Activated CD4-positive, alpha-beta T cell treated with anti-CD3 and anti-CD28 coated beads, Interleukin-2, amount 10 ng/mL, durations not matched to agents 24 days and 14 days (primary cell): ENCODE measurements at regions of chr12 and their contacts with region 1.

Region 1: GRCh38 chr12:56127888-56128669 is at the start of gene ESYT1:
- DNase-seq: peak; percentile 99
- H3K4me3 Mint-ChIP-seq: peak within 1 kb of the TSS; percentile 98
- H3K27ac Mint-ChIP-seq: peak within 1 kb of the TSS; percentile 94
- H3K4me1 Mint-ChIP-seq: peaks cover 65% of the 10 kb centered on the region
- H3K27me3 Mint-ChIP-seq: no peaks in the 10 kb centered on the region
- total RNA-seq, gene ESYT1: 155 and 158 TPM in 2 replicates

Region 2: GRCh38 chr12:56152318-56153033 is 24.4 kb after region 1 on chr12 and contains the start of gene MYL6B:
- intact Hi-C with region 1: loop called (anchors 1 kb)
- DNase-seq: peak; percentile 98
- H3K4me3 Mint-ChIP-seq: peak within 1 kb of the TSS; percentile 88
- H3K27ac Mint-ChIP-seq: peak within 1 kb of the TSS; percentile 98
- H3K4me1 Mint-ChIP-seq: peaks cover 39% of the 10 kb centered on the region
- H3K27me3 Mint-ChIP-seq: no peaks in the 10 kb centered on the region
- total RNA-seq, gene MYL6B: 63.3 and 68.9 TPM in 2 replicates

Region 3: DNA sequence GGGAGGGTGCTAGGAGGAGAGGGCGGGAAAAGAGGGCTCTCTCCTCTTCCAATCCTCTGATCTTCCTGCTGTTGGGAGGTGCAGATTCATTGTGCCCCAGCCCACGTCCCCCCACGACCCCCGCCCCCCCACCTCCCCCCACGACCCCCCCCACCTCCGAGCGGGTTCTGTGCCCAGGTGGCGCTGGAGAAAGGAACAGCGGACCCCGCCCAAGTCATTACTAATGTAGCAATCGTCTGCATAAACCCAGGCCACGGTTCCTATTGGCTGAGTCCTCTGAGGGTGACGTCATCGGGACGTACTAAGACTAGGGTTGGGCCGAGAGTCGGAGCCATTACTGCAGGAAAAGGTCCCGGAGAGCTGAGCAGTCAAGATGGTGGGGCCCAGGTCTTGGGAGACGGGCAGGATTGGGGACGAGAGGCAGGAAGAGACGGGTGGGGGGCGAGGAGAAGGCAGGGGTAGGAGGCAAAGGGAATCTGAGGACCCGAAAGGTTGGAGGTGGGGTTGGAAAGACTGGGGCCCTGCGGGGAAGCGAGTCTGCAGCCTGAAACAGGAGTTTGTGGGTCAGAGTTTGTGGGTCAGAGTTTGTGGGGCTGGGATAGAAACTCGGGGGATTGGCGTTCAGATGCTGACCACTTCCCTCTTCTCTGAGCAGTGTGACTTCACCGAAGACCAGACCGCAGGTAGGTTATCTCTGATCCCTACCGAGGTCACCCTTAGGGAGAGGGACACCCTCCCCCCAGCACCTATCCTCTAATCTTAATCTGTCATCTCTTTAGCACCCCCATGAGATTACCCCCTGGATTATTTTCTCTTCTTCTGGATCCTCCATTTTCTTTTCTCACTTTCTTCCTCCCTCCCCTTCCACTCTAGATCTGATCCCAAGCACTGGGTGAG is 30.2 kb after region 1 on chr12 and contains the start of gene MYL6:
- intact Hi-C with region 1: loop called (anchors 1 kb)
- DNase-seq: peak; percentile 98
- H3K4me3 Mint-ChIP-seq: peak within 1 kb of the TSS; percentile 100
- H3K27ac Mint-ChIP-seq: peak within 1 kb of the TSS; percentile 94
- H3K4me1 Mint-ChIP-seq: peaks cover 45% of the 10 kb centered on the region
- H3K27me3 Mint-ChIP-seq: no peaks in the 10 kb centered on the region
- total RNA-seq, gene MYL6: 717 and 752 TPM in 2 replicates

Region 4: GRCh38 chr12:56189176-56189917 is 61.3 kb after region 1 on chr12 and contains the start of gene SMARCC2:
- intact Hi-C with region 1: loop called (anchors 1 kb)
- DNase-seq: peak; percentile 96
- H3K4me3 Mint-ChIP-seq: peak within 1 kb of the TSS; percentile 97
- H3K27ac Mint-ChIP-seq: peak within 1 kb of the TSS; percentile 95
- H3K4me1 Mint-ChIP-seq: peaks cover 42% of the 10 kb centered on the region
- H3K27me3 Mint-ChIP-seq: no peaks in the 10 kb centered on the region
- total RNA-seq, gene SMARCC2: 127 and 130 TPM in 2 replicates

Region 5: GRCh38 chr12:56258057-56258819 is 130.2 kb after region 1 on chr12 and contains the start of gene ANKRD52:
- intact Hi-C with region 1: loop called (anchors 2 kb)
- DNase-seq: peak; percentile 96
- H3K4me3 Mint-ChIP-seq: peak within 1 kb of the TSS; percentile 96
- H3K27ac Mint-ChIP-seq: peak within 1 kb of the TSS; percentile 84
- H3K4me1 Mint-ChIP-seq: peaks cover 17% of the 10 kb centered on the region
- H3K27me3 Mint-ChIP-seq: no peaks in the 10 kb centered on the region
- total RNA-seq, gene ANKRD52: 68.0 and 69.0 TPM in 2 replicates

Region 6: GRCh38 chr12:56448860-56449621 is 321.0 kb after region 1 on chr12 and contains the start of gene TIMELESS:
- intact Hi-C with region 1: loop called (anchors 5 kb)
- DNase-seq: peak; percentile 97
- H3K4me3 Mint-ChIP-seq: peak within 1 kb of the TSS; percentile 95
- H3K27ac Mint-ChIP-seq: peak within 1 kb of the TSS; percentile 90
- H3K4me1 Mint-ChIP-seq: peaks cover 29% of the 10 kb centered on the region
- H3K27me3 Mint-ChIP-seq: no peaks in the 10 kb centered on the region
- total RNA-seq, gene TIMELESS: 46.5 and 48.8 TPM in 2 replicates

Region 7: DNA sequence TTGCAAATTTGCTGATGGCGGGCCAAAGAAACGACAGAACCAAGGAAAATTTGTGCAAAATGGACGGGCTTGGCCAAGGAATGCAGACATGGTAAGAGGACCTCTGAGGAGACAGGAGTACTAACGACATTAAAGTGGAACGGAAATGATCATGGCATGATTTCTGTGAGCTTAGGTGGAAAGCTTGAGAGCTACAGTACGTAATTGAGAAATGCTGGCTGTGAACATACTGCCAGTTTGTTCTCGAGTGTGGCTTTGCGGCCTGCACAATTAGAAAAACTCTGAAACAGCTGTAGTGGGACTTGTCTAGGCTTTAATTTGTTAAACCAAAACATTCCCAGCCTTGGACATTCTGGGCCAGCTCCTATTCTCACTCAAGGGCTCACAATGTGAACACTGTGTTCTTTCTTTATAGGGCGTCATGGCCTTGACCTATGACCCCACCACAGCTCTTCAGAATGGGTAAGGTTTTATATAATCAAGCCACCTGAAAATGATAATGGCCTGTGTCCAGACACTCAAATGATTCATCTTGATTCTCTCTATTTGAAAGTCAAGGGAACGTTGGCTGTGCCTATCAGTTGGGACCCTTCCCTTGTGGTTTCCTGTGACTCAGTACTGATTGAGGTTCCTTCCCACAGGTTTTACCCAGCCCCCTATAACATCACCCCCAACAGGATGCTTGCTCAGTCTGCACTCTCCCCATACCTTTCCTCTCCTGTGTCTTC is 453.5 kb after region 1 on chr12:
- intact Hi-C with region 1: no loop called
- DNase-seq: peak; percentile 64
- H3K4me3 Mint-ChIP-seq: no peak overlapping the region
- H3K27ac Mint-ChIP-seq: no peak overlapping the region
- H3K4me1 Mint-ChIP-seq: peaks cover 12% of the 10 kb centered on the region
- H3K27me3 Mint-ChIP-seq: no peaks in the 10 kb centered on the region

Region 8: GRCh38 chr12:57751788-57752667 is 1623.9 kb after region 1 on chr12 and contains the start of gene CDK4:
- intact Hi-C with region 1: loop called (anchors 10 kb)
- DNase-seq: peak; percentile 99
- H3K4me3 Mint-ChIP-seq: peak within 1 kb of the TSS; percentile 96
- H3K27ac Mint-ChIP-seq: peak within 1 kb of the TSS; percentile 97
- H3K4me1 Mint-ChIP-seq: peaks cover 56% of the 10 kb centered on the region
- H3K27me3 Mint-ChIP-seq: no peaks in the 10 kb centered on the region
- total RNA-seq, gene CDK4: 240 and 248 TPM in 2 replicates